IMR-90 (cell line): ENCODE measurements at regions of chr17 and their contacts with region 1.

Region 1: DNA sequence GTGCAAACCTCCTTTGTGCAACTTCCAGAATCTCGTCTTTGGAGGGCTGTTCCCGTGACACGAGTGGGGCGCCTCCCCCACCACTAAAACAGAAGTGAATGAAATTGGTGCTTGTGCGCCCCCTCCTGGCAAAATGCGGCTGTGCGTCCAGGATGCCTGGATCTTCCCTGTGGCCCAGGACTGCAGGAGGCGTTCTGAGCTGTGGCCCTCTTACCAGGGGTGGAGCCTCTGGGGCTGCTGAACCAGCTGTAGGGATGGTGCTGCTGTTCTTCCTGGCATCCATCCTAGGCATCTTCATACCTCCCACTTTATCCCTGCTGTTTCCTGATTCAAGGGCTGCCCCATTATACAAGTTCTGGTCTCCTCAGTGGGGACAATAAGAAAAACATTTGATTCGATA is 18.5 kb upstream of the NAGLU start:
- DNase-seq: peak; percentile 92
- ATAC-seq: peak; percentile 51
- H3K4me3 ChIP-seq: no peak overlapping the region
- H3K27ac ChIP-seq: peak overlapping the region; percentile 99
- H3K4me1 ChIP-seq: peaks cover 71% of the 10 kb centered on the region
- H3K27me3 ChIP-seq: no peaks in the 10 kb centered on the region
- CTCF ChIP-seq: peak; percentile 99
- POLR2A ChIP-seq: no peak
- RAD21 ChIP-seq: peak; percentile 90

Region 2: GRCh38 chr17:42388381-42389134 is 129.0 kb before region 1 on chr17 and contains the start of gene STAT3:
- CTCF ChIA-PET with region 1: no interaction called
- POLR2A ChIA-PET with region 1: no interaction called
- dilution Hi-C with region 1: no loop called
- in situ Hi-C with region 1: no loop called
- intact Hi-C with region 1: no loop called
- DNase-seq: peak; percentile 100
- ATAC-seq: peak; percentile 97
- H3K4me3 ChIP-seq: peak within 1 kb of the TSS; percentile 99
- H3K27ac ChIP-seq: peak within 1 kb of the TSS; percentile 92
- H3K4me1 ChIP-seq: peaks cover 6% of the 10 kb centered on the region
- H3K27me3 ChIP-seq: no peaks in the 10 kb centered on the region
- CTCF ChIP-seq: no peak; the same call in 1 of the 2 replicates
- POLR2A ChIP-seq: peak; percentile 79
- RAD21 ChIP-seq: peak; percentile 26; the same call in 1 of the 2 replicates
- total RNA-seq, gene STAT3: 61.9 and 66.3 TPM in 2 replicates

Region 3: DNA sequence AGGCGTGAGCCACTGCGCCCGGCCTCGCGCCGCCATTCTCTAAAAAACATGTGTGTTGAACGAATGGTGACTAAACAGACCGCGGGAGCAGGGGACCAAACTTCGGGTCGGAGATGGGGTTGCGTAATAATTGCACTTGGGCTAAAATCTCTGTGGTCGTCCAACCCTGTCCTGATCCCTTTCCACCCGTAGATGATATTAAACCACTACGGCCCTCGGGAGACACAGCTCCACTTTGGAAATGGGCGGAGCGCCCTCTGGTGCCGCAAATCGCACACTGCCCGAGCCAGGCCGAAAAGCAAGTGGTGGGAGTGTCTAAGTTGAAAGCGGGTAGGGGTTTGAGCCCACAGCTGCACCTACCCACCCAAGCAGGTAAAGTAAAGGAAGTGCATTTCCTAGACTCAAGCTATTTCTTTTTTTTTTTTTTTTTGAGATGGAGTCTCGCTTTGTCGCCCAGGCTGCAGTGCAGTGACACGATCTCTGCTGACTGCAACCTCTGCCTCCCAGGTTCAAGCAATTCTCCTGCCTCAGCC is 111.5 kb before region 1 on chr17:
- CTCF ChIA-PET with region 1: interaction called, 4 read pairs
- POLR2A ChIA-PET with region 1: no interaction called
- dilution Hi-C with region 1: no loop called
- in situ Hi-C with region 1: no loop called
- intact Hi-C with region 1: loop called (anchors 5 kb)
- DNase-seq: peak; percentile 59
- ATAC-seq: peak; percentile 38
- H3K4me3 ChIP-seq: no peak overlapping the region
- H3K27ac ChIP-seq: 0 out of 2 replicates have a peak overlapping the region, but pooled peaks have one; percentile 1
- H3K4me1 ChIP-seq: peaks cover 41% of the 10 kb centered on the region
- H3K27me3 ChIP-seq: no peaks in the 10 kb centered on the region
- CTCF ChIP-seq: peak; percentile 87
- POLR2A ChIP-seq: no peak
- RAD21 ChIP-seq: peak; percentile 87

Region 4: DNA sequence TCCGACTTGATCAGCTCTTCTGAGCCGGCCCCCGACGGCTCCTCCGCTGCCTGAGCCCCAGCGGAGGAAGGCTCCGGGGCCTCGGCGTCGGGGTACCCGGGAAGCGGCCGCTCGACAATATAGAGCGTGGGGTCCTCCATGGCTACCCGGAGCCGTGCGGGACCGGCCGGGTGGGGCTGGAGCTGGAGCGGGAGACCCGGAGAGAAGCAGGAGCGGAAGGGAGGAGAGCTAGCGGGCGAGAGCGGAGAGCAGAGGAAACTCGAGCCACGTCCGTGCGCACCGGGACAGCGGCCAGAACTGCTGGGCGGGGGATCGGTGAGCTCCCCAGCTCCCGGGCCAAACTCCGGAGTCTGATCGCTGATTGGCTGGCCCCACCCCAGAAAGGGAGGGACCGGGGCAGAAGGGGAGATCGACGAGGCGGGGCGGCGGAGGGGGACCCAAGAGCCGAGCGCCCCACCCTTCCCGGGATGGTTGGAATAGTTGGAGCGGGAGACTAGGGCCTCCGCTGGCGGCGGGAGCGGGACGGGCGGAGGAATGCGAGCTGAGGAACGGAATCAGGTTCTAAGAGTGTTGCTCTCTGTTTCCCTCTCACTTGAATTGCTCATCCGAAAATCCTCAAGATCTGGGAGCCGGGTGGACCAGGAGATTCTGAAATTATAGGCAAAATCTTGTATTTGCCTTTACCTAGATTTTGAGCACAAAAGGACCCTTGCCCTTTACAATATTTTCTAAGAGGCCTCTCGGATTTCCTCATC is 94.4 kb before region 1 on chr17 and contains the start of gene CAVIN1:
- CTCF ChIA-PET with region 1: interaction called, 3 read pairs
- POLR2A ChIA-PET with region 1: interaction called, 17 read pairs
- dilution Hi-C with region 1: no loop called
- in situ Hi-C with region 1: no loop called
- intact Hi-C with region 1: loop called (anchors 2 kb)
- DNase-seq: peak; percentile 98
- ATAC-seq: peak; percentile 80
- H3K4me3 ChIP-seq: peak within 1 kb of the TSS; percentile 92
- H3K27ac ChIP-seq: peak within 1 kb of the TSS; percentile 97
- H3K4me1 ChIP-seq: peaks cover 23% of the 10 kb centered on the region
- H3K27me3 ChIP-seq: no peaks in the 10 kb centered on the region
- CTCF ChIP-seq: 0 out of 2 replicates have a peak, but pooled peaks have one; percentile 8
- POLR2A ChIP-seq: peak; percentile 99
- RAD21 ChIP-seq: no peak; the same call in none of the 2 replicates
- total RNA-seq, gene CAVIN1: 556 and 644 TPM in 2 replicates

Region 5: GRCh38 chr17:42428141-42428944 is 89.2 kb before region 1 on chr17:
- CTCF ChIA-PET with region 1: no interaction called
- POLR2A ChIA-PET with region 1: interaction called, 17 read pairs
- dilution Hi-C with region 1: no loop called
- in situ Hi-C with region 1: no loop called
- intact Hi-C with region 1: loop called (anchors 2 kb)
- DNase-seq: peak; percentile 99
- ATAC-seq: peak; percentile 92
- H3K4me3 ChIP-seq: no peak overlapping the region
- H3K27ac ChIP-seq: peak overlapping the region; percentile 64
- H3K4me1 ChIP-seq: peaks cover 13% of the 10 kb centered on the region
- H3K27me3 ChIP-seq: no peaks in the 10 kb centered on the region
- CTCF ChIP-seq: peak; percentile 82
- POLR2A ChIP-seq: peak; percentile 45; the same call in 1 of the 2 replicates
- RAD21 ChIP-seq: peak; percentile 82